ENCODE measurements at regions of chr3 and their contacts with region 1.

Region 1: GRCh38 chr3:13648060-13649001 is 99.4 kb downstream of the FBLN2 start:
- DNase-seq: peak; percentile 81
- H3K4me3 Mint-ChIP-seq: no peak overlapping the region
- H3K27ac Mint-ChIP-seq: peak overlapping the region; percentile 34
- H3K4me1 Mint-ChIP-seq: peaks cover 36% of the 10 kb centered on the region
- H3K27me3 Mint-ChIP-seq: peaks cover 75% of the 10 kb centered on the region

Region 2: DNA sequence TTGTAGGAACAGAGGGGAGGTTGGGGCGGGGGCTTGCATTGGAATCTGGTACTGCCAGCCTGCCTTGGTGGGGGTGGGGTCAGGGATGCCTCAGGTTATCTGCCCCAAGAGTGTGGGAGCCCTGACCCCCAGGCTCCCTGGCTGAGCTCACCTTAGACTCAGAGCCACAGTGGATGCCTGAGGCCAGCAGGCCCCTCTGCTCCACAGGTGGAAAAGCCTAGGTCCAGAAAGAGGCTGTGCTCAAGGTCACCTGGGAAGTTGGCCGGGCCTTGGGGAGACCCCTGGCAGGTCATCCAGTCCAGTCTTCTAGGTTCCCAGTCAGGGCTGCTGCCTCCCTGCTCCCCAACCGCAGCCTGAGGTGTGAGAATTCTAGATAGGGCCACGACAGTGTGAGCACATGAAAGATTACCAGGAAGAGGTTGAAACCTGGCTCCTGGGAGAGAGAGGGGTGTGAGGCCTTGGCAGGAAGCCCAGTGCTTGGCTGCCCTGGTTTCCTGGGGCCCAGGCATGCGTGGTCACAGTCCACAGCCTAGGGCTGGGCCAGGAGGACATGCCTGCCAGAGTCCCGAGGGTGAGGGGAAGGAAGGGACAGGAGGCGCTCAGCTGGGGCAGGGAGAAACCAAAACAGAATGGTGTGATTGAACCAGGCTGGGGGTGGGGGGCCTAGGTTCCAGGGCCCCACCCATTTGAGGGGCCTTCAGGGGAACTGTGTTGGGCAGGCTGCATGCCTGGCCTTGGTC is 163.3 kb before region 1 on chr3:
- CTCF ChIA-PET with region 1: interaction called, 20 read pairs
- DNase-seq: no peak
- H3K4me3 Mint-ChIP-seq: no peak overlapping the region
- H3K27ac Mint-ChIP-seq: no peak overlapping the region
- H3K4me1 Mint-ChIP-seq: peaks cover 18% of the 10 kb centered on the region
- H3K27me3 Mint-ChIP-seq: peaks cover 31% of the 10 kb centered on the region

Region 3: DNA sequence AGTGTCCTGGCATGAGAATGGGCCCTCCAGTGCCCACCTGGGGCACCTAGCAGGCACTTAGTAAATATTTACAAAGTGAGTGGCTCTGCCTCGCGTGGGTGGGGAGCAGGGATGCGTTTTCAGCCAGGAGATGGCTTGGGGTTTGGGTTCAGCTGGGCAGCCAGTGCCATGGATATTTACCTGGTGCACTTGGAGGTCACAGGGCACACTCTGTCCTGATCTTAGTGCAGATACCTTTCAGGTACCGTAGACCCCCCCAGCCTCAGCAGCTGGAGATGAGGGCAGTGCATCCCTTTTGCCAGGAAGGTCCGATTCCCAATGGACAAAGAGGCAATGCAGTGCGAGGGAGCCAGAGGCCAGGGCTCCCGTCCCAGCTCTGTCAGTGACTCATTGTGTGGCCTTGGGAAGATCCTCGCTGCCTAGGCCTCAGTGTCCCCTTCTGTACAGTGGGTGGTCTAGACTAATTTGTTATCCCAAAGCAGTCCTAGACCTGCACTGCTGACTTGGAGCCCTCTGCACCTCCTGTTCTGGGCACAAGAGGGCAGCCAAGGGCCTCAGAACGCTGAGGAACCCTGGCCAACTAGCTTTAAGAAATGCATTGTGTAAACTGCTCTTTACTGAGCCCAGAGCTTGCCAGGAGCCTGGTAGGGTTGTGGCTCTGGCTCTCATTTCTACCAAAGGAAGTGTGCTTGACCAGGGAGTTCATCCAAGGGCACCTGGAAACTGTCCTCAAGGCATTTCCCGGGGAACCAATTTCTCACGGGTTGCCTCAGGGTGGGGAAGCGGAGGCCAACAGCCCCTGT is 152.2 kb before region 1 on chr3:
- CTCF ChIA-PET with region 1: interaction called, 352 read pairs
- DNase-seq: peak; percentile 82
- H3K4me3 Mint-ChIP-seq: no peak overlapping the region
- H3K27ac Mint-ChIP-seq: no peak overlapping the region
- H3K4me1 Mint-ChIP-seq: peaks cover 9% of the 10 kb centered on the region
- H3K27me3 Mint-ChIP-seq: peaks cover 22% of the 10 kb centered on the region

Region 4: GRCh38 chr3:13687517-13687943 is 39.2 kb after region 1 on chr3:
- CTCF ChIA-PET with region 1: no interaction called
- DNase-seq: no peak
- H3K4me3 Mint-ChIP-seq: no peak overlapping the region
- H3K27ac Mint-ChIP-seq: no peak overlapping the region
- H3K4me1 Mint-ChIP-seq: no peaks in the 10 kb centered on the region
- H3K27me3 Mint-ChIP-seq: peaks cover 15% of the 10 kb centered on the region

Region 5: GRCh38 chr3:13884851-13885703 is 236.7 kb after region 1 on chr3:
- CTCF ChIA-PET with region 1: interaction called, 470 read pairs
- DNase-seq: peak; percentile 84
- H3K4me3 Mint-ChIP-seq: no peak overlapping the region
- H3K27ac Mint-ChIP-seq: no peak overlapping the region
- H3K4me1 Mint-ChIP-seq: peaks cover 13% of the 10 kb centered on the region
- H3K27me3 Mint-ChIP-seq: peaks cover 66% of the 10 kb centered on the region